ENCODE measurements at regions of chr7 and their contacts with region 1.

Region 1: DNA sequence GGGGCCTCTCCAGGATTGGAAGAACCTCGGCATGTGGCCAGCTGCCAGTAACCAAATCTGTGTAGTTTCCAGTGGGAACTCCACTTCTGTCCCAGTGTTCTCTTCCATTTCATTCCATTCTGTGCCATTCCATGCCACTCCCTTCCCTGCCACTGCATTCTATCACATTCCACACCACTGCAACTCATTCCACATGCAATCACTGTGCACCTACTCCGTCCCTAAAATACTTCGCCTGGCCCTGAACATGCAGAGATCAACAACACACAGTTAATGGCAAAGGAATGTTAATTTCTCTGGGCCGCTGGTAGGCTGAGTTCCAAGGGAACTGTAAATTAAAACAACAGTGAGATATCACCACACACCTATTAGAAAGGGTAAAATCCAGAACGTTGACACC is 64.9 kb downstream of the AKR1B1 start:
- DNase-seq: no peak
- ATAC-seq: peak in 1 of 2 experiments; percentile 46; a peak in 3 of 6 replicates
- H3K4me3 ChIP-seq: no peak overlapping the region
- H3K27ac ChIP-seq: no peak overlapping the region
- H3K4me1 ChIP-seq: no peaks in the 10 kb centered on the region
- CTCF ChIP-seq: no peak
- EP300 ChIP-seq: peak in 1 of 2 experiments; percentile 24; a peak in 1 of 5 replicates
- POLR2A ChIP-seq: no peak
- RAD21 ChIP-seq: no peak

Region 2: GRCh38 chr7:134368851-134369552 is 25.0 kb before region 1 on chr7:
- CTCF ChIA-PET with region 1: interaction called, 10 read pairs
- POLR2A ChIA-PET with region 1: interaction called, 10 read pairs
- DNase-seq: peak; percentile 81 to 97
- ATAC-seq: peak; percentile 45 to 81
- H3K4me3 ChIP-seq: no peak overlapping the region
- H3K27ac ChIP-seq: peak overlapping the region; percentile 89 to 90
- H3K4me1 ChIP-seq: peaks cover 61% of the 10 kb centered on the region
- CTCF ChIP-seq: no peak
- EP300 ChIP-seq: peak; percentile 96 to 97
- POLR2A ChIP-seq: no peak
- RAD21 ChIP-seq: peak in 1 of 2 experiments; percentile 69; a peak in 4 of 5 replicates

Region 3: DNA sequence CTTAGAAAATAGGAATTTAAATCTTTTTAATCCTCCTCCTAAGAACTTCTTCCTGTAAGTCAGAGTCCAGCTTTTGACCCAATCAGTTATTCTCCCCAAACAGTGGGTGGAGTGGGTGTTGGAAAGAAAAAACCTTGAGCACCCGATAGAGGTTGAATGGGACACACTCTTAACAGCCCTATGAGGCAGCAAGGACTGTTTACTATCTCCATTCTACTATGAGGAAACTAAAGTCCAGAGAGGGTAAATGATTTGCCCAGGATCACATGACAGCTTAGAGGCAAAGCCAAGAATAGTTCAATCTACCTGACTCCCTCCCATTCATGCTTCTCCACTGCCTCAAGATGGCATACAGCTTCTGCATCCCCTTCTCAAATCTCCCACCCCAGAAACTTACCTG is 19.8 kb before region 1 on chr7:
- CTCF ChIA-PET with region 1: interaction called, 10 read pairs
- POLR2A ChIA-PET with region 1: no interaction called
- DNase-seq: no peak
- ATAC-seq: peak in 1 of 2 experiments; percentile 25; a peak in 1 of 6 replicates
- H3K4me3 ChIP-seq: no peak overlapping the region
- H3K27ac ChIP-seq: peak overlapping the region; percentile 8 to 45; a peak in 4 of 6 replicates
- H3K4me1 ChIP-seq: peaks cover 19% of the 10 kb centered on the region
- CTCF ChIP-seq: no peak
- EP300 ChIP-seq: no peak
- POLR2A ChIP-seq: no peak
- RAD21 ChIP-seq: no peak

Measured in A549 (cell line).